ENCODE measurements at regions of chr10 and their contacts with region 1.

Region 1: GRCh38 chr10:97759158-97759887 is 12.5 kb downstream of the SFRP5 start:
- DNase-seq: peak; percentile 49 to 83
- ATAC-seq: peak; percentile 79 to 87 (median 84)
- H3K4me3 ChIP-seq: no peak overlapping the region
- H3K27ac ChIP-seq: no peak overlapping the region
- H3K4me1 ChIP-seq: no peaks in the 10 kb centered on the region
- H3K27me3 ChIP-seq: no peaks in the 10 kb centered on the region
- CTCF ChIP-seq: peak; percentile 86

Region 2: DNA sequence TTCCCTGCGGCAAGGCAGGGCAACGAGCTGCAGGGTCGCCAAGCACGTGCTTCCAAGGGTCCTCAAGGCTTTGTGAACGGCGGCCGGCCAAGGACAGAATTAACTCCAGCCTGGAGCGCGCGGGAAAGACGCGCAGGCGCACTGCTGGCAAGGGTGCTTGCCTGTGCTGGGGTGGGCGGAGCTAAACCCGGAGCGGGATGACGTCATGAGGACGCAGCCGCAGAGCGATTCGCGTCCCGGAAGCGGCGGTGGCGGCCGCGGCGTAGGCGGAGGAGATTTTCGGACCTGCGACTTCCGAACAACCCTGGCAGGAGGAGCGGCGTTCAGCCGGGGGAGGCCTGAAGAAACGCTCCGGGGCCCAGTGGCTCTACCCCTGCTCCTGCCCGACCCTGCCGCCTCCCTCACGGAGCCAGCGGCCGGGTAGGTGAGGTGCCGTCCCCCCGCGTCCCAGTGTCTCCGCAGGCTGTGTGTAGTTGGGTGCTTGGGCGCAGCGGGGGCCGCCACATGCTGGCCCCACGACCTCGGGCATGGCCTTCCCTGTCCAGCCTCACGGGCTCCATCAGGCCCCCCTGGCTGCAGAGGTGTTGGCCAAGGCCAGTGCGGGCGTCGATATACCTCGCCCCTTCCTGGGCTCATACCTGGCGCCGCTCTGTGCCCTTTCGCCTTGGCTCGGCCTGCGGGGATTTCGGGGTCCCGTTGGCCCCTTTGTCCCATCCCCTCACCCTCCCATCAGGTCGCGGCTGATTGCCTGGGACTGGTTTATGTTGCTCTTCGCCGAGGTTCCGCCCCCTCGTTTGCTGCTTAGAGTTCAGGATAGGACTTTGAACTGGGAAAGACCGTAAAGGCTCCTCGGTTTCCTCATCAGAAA is 22.2 kb before region 1 on chr10 and contains the start of gene ZFYVE27:
- intact Hi-C with region 1: no loop called
- DNase-seq: peak; percentile 97 to 99
- ATAC-seq: peak; percentile 97 to 99 (median 98)
- H3K4me3 ChIP-seq: peak within 1 kb of the TSS; percentile 99
- H3K27ac ChIP-seq: peak within 1 kb of the TSS; percentile 98
- H3K4me1 ChIP-seq: peaks cover 9% of the 10 kb centered on the region
- H3K27me3 ChIP-seq: no peaks in the 10 kb centered on the region
- CTCF ChIP-seq: no peak
- total RNA-seq, gene ZFYVE27: 9.8 to 15.1 (median 12.1) TPM

Region 3: GRCh38 chr10:97805096-97805884 is 46.0 kb after region 1 on chr10:
- intact Hi-C with region 1: no loop called
- DNase-seq: peak in 1 of 2 donors; percentile 62
- ATAC-seq: peak in 3 of 4 donors; percentile 63 to 82 (median 72)
- H3K4me3 ChIP-seq: no peak overlapping the region
- H3K27ac ChIP-seq: peak overlapping the region; percentile 43
- H3K4me1 ChIP-seq: peaks cover 10% of the 10 kb centered on the region
- H3K27me3 ChIP-seq: no peaks in the 10 kb centered on the region
- CTCF ChIP-seq: no peak

Region 4: DNA sequence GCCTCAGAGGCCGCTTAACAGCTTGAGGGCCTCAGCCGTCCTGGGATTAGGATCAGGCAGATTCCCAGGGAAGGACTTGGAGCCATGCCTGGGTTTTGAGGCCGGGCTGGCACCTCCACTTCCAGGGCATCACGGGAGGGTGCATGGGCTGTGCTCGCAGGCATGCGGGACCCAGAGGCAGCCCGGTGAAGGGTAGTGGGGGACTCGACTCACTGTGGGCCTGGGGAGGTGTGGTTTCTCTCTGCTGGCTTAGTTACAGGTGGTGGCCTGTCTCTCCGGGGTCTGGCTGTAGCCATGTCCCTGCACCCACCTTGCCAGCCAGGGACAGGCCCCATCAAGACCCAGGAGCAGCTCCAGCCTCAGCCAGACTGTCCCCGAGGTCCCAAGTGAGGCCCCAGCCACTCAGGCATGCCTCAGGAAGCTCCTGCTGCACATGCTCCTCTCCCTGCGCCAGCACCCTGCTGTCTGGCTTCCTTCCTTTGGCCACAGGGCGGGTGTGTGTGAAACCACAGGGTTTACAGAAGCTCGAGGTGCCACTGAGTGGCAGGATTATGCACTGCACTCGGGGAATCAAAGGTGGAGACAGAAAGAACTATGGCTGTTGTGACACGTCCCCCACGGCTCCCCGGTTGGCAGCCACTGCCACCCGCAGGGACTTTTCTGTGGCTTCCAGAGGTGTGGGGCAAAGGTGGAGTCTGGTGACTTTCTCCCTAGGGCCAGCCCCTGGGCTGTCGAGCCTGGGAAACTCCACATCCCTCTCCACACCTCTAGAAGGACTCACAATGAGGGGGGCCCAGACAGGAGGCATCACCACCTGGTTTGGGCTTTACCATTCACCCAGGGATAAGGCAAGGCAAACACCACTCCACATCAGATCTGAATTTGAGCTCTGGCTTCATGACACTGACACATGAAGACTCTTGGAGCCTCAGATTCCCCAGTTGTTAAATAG is 110.0 kb after region 1 on chr10:
- intact Hi-C with region 1: loop called in 1 of 2 experiments (anchors 1 kb)
- DNase-seq: peak; percentile 81 to 92
- ATAC-seq: peak; percentile 96 to 99 (median 98)
- H3K4me3 ChIP-seq: no peak overlapping the region
- H3K27ac ChIP-seq: no peak overlapping the region
- H3K4me1 ChIP-seq: peaks cover 12% of the 10 kb centered on the region
- H3K27me3 ChIP-seq: peaks cover 0 to 11% (median 4%) of the 10 kb centered on the region in 3 donors
- CTCF ChIP-seq: peak; percentile 89

Region 5: DNA sequence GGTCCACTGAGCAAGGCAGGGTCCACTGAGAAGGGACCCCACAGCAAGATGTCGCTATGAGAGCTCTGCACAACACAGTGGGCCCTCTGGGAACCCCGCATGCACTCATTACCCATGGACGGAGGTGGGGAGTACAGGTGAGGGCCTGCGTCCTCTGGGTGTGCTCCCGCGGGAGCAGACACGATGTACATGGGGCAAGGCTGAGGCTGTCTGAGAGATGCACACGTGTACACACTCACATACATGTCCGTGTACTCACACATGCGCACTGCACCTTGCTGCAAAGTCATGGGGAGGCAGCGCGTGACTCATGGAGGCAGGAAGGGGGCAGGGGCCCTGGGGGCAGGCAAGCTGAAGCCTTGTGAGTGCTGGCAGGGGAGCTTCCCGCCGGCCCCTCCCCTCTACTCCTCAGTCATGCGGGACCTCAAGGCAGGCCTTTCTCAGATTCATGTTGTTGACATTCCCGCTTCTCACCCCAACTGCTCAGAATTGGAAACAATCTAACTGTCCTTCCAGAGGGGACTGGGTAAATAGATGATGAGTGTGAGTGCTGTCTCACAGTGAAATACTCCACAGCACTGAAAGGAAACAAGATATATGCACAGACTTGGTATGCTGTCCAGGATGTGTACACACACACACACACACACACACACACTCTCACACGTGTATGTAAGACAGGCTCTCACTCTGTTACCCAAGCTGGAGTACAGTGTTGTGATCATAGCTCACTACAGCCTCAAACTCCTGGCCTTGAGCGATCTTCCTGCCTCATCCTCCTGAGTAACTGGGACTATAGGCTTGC is 130.3 kb after region 1 on chr10:
- intact Hi-C with region 1: no loop called
- DNase-seq: no peak
- ATAC-seq: no peak
- H3K4me3 ChIP-seq: no peak overlapping the region
- H3K27ac ChIP-seq: no peak overlapping the region
- H3K4me1 ChIP-seq: no peaks in the 10 kb centered on the region
- H3K27me3 ChIP-seq: peaks cover 0 to 3% (median 2%) of the 10 kb centered on the region in 3 donors
- CTCF ChIP-seq: no peak

Region 6: GRCh38 chr10:97914837-97915211 is 155.5 kb after region 1 on chr10:
- intact Hi-C with region 1: no loop called
- DNase-seq: peak; percentile 72 to 89
- ATAC-seq: peak; percentile 87 to 95 (median 92)
- H3K4me3 ChIP-seq: peak overlapping the region; percentile 30
- H3K27ac ChIP-seq: no peak overlapping the region
- H3K4me1 ChIP-seq: peaks cover 9% of the 10 kb centered on the region
- H3K27me3 ChIP-seq: peaks cover 0 to 15% (median 0%) of the 10 kb centered on the region in 3 donors
- CTCF ChIP-seq: peak; percentile 90

Region 7: DNA sequence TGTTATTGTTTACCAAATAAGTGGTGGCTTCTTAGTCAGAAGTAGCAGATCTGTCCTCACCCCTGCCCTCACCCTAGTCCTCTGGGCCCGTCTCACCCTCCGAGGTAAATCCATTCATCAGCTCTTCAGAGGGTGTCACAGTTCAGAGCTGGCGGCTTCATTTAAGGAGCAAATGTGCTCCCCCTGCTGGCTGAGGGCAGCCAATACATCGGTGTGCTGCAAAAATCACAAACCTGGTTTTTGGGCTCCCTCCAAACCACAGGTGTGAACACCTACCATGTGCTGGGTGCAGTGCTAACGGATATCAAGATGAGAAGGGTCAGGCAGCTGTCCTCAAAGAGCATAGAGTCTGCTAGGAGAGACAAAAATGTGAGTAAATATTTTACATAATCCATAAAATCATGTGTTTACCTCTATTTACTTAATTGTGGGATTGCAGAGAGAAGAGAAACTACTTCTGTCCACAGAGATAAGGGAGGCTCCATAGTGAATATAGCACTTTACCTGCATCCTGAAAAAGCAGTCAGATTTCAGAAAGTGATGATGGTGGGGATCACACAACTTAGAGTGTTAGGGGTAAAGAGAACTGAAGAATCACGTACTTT is 286.6 kb after region 1 on chr10:
- intact Hi-C with region 1: loop called in 1 of 2 experiments (anchors 10 kb)
- DNase-seq: peak; percentile 38 to 59
- ATAC-seq: peak; percentile 76 to 85 (median 80)
- H3K4me3 ChIP-seq: no peak overlapping the region
- H3K27ac ChIP-seq: no peak overlapping the region
- H3K4me1 ChIP-seq: no peaks in the 10 kb centered on the region
- H3K27me3 ChIP-seq: peaks cover 0 to 28% (median 2%) of the 10 kb centered on the region in 3 donors
- CTCF ChIP-seq: peak; percentile 83

Measured in psoas muscle (tissue), 8 donors.